ENCODE measurements at regions of chr11 and their contacts with region 1.

Region 1: DNA sequence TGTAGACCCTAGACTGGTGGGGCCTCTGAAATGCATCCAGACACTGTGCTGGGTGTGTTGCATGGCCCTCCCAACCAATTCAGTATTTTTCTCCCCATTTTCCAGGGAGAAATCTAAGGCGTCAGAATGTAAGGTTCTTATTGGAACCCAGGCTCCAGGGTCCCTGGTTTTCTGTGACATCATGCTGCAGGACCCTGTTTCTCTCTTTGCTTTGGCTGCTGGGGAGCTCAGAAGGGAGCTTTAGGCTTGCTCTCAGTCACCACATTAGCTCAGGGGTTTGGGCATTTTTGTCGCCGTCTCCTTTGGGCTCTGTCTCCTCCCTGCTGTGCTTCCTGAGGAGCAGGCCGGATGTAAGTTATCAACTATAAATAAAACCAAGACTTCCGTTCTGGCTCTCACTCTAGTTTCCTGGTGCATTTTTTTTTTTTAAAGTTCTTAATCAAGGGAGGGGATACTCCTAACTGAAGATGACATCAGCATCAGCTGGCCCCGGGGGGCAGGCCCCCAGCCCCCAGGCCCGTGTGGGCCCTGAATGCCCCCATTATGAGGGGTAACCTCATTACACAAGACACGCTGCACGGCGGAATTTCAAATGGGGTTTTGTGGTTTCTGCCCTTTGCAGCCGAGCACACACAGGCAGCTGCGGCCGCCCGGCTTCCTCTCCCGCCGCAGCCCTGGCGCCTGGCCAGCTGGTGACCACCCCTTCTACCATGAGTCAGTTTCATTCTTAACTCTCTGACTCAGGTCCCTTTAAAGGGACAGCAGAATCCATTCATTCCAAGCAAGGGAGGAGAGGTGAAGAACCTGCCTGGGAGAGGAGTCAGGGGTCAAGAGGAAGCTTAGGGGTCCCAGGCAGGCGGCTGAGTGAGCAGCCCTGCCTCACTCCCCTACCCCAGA is 3.2 kb downstream of the MYEOV start:
- DNase-seq: peak; percentile 94 to 97 (median 95)
- ATAC-seq: peak; percentile 49 to 89 (median 82)
- H3K4me3 ChIP-seq: peak overlapping the region in 9 of 12 donors; percentile 6 to 43 (median 30)
- H3K27ac ChIP-seq: peak overlapping the region in 11 of 12 donors; percentile 70 to 94 (median 81)
- H3K4me1 ChIP-seq: peaks cover 15 to 90% (median 47%) of the 10 kb centered on the region in 12 donors
- H3K27me3 ChIP-seq: no peaks in the 10 kb centered on the region
- CTCF ChIP-seq: no peak
- POLR2A ChIP-seq: no peak

Region 2: GRCh38 chr11:69122642-69123431 is 174.3 kb before region 1 on chr11:
- intact Hi-C with region 1: loop called in 1 of 10 experiments (anchors 10 kb)
- DNase-seq: peak in 4 of 5 donors; percentile 57 to 87 (median 72)
- ATAC-seq: peak; percentile 85 to 92 (median 90)
- H3K4me3 ChIP-seq: peak overlapping the region in 3 of 12 donors; percentile 3 to 10 (median 4)
- H3K27ac ChIP-seq: peak overlapping the region in 11 of 12 donors; percentile 42 to 75 (median 70)
- H3K4me1 ChIP-seq: peaks cover 10 to 27% (median 18%) of the 10 kb centered on the region in 12 donors
- H3K27me3 ChIP-seq: no peaks in the 10 kb centered on the region
- CTCF ChIP-seq: no peak
- POLR2A ChIP-seq: peak in 1 of 2 donors; percentile 21

Region 3: DNA sequence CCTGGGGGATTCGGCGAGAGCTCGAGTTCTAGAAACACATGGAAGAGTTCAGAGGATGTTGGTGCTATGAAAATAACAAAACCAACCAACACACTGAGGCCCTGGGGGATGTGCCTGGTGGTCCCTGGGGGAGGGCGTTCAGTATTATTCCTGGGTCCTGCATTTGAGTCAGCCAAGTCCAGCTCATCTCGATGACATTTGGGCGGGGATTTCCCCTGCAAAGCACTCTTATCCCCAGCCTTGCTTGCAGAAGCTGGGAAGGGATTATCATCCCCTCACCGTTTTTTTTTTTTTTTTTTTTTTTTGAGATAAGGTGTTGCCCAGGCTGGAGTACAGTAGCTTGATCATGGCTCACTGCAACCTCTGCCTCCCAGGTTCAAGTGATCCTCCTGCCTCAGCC is 143.5 kb before region 1 on chr11:
- intact Hi-C with region 1: loop called in 1 of 10 experiments (anchors 5 kb)
- DNase-seq: peak in 2 of 5 donors; percentile 39 to 52
- ATAC-seq: no peak
- H3K4me3 ChIP-seq: no peak overlapping the region
- H3K27ac ChIP-seq: peak overlapping the region in 7 of 12 donors; percentile 8 to 64 (median 46)
- H3K4me1 ChIP-seq: peaks cover 10 to 57% (median 34%) of the 10 kb centered on the region in 12 donors
- H3K27me3 ChIP-seq: peaks cover 0 to 9% (median 0%) of the 10 kb centered on the region in 9 donors
- CTCF ChIP-seq: no peak
- POLR2A ChIP-seq: no peak

Region 4: GRCh38 chr11:69443138-69443967 is 146.2 kb after region 1 on chr11:
- intact Hi-C with region 1: loop called in 7 of 10 experiments (anchors 2 to 10 kb)
- DNase-seq: peak; percentile 94 to 96 (median 95)
- ATAC-seq: peak; percentile 87 to 96 (median 93)
- H3K4me3 ChIP-seq: peak overlapping the region in 10 of 12 donors; percentile 29 to 64 (median 50)
- H3K27ac ChIP-seq: peak overlapping the region; percentile 67 to 95 (median 90)
- H3K4me1 ChIP-seq: peaks cover 3 to 47% (median 33%) of the 10 kb centered on the region in 12 donors
- H3K27me3 ChIP-seq: no peaks in the 10 kb centered on the region
- CTCF ChIP-seq: no peak
- POLR2A ChIP-seq: peak in 1 of 2 donors; percentile 70